Lower lobe of right lung (tissue), 2 donors: ENCODE measurements at regions of chr5 and their contacts with region 1.

Region 1: DNA sequence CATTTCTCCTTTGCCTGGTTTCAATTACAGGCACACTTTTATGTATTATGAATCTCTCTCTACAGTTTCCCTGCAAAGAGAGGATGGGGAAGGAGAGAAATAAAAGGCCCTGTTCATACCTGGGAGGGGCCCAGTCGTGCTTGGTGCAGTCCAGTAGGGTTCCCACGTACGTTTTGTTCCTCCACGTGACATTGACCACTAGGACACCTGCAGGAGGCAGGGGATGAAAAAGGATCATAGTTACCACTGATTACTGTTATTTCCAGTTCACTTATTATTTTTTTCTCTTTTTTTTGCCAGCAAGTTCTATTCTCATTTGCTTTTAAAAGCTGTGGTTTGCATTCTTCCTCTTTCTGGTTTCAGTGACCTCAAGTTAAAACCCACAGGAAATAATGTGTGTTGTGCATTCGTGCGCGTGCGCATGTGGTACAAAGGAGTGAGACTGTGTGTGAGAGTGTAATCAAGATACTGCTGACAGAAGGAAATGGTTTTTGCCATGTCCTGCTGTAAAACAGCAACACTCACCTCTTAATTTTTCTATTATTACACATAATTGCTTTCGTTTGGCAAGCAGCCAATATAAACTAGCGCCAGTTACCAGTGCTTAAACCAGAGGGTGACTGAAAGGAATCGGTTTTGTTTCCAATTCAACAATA is 96.8 kb downstream of the ZNF608 start:
- DNase-seq: peak; percentile 90
- ATAC-seq: peak; percentile 65 to 84
- H3K4me3 ChIP-seq: peak overlapping the region; percentile 27
- H3K27ac ChIP-seq: peak overlapping the region; percentile 74
- H3K4me1 ChIP-seq: peaks cover 51% of the 10 kb centered on the region
- H3K27me3 ChIP-seq: no peaks in the 10 kb centered on the region
- CTCF ChIP-seq: no peak

Region 2: DNA sequence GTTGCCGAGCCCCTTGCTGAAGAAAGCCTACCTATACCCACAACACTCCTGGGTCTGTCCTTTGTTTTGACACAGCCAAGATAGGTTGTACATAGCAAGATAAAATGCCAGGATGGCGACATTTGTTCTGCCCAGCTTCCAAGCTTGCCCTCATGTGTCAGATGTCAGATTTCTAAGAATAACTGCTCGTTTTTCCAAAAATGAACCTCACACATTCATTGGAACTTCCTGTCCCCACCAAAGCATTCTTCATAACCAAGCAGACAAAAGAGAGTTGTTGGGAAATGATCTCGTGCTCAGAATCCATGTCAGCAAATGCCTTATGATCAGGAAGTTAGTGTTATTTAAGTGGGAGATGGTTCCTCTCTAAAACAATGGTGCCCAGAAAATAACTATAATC is 113.3 kb before region 1 on chr5:
- intact Hi-C with region 1: no loop called
- DNase-seq: no peak
- ATAC-seq: peak in 1 of 2 donors; percentile 33
- H3K4me3 ChIP-seq: no peak overlapping the region
- H3K27ac ChIP-seq: peak overlapping the region; percentile 36
- H3K4me1 ChIP-seq: no peaks in the 10 kb centered on the region
- H3K27me3 ChIP-seq: no peaks in the 10 kb centered on the region
- CTCF ChIP-seq: no peak

Region 3: GRCh38 chr5:124748687-124749594 is 99.3 kb after region 1 on chr5:
- intact Hi-C with region 1: loop called (anchors 10 kb)
- DNase-seq: peak; percentile 68
- ATAC-seq: peak; percentile 91
- H3K4me3 ChIP-seq: peak overlapping the region; percentile 73
- H3K27ac ChIP-seq: peak overlapping the region; percentile 91
- H3K4me1 ChIP-seq: peaks cover 6% of the 10 kb centered on the region
- H3K27me3 ChIP-seq: peaks cover 4% of the 10 kb centered on the region
- CTCF ChIP-seq: no peak

Region 4: DNA sequence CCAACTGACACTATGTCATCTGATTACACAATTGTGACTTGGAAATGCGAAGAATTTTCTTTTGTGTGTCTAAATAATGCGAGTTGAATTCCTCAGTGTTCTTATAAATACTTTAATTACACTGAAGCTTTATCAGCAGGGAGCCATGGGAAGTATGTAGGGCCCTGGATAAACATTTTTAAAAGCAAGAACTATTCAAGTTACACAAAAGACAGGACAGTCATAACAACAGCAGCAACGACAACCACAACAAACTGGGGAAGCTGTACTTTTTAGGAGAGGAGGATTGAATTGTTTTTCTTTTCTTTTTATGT is 347.1 kb after region 1 on chr5:
- intact Hi-C with region 1: no loop called
- DNase-seq: no peak
- ATAC-seq: no peak
- H3K4me3 ChIP-seq: no peak overlapping the region
- H3K27ac ChIP-seq: no peak overlapping the region
- H3K4me1 ChIP-seq: no peaks in the 10 kb centered on the region
- H3K27me3 ChIP-seq: no peaks in the 10 kb centered on the region
- CTCF ChIP-seq: no peak